A673 (cell line): ENCODE measurements at regions of chr3 and their contacts with region 1.

Region 1: GRCh38 chr3:30658328-30659052 is 52.1 kb downstream of the TGFBR2 start:
- DNase-seq: peak; percentile 84
- H3K4me3 ChIP-seq: peak overlapping the region; percentile 5
- H3K27ac ChIP-seq: peak overlapping the region; percentile 92
- H3K4me1 ChIP-seq: peaks cover 98% of the 10 kb centered on the region
- H3K27me3 ChIP-seq: no peaks in the 10 kb centered on the region
- CTCF ChIP-seq: peak; percentile 42

Region 2: GRCh38 chr3:30481241-30481640 is 177.2 kb before region 1 on chr3:
- CTCF ChIA-PET with region 1: no interaction called
- POLR2A ChIA-PET with region 1: no interaction called
- intact Hi-C with region 1: no loop called
- DNase-seq: no peak
- H3K4me3 ChIP-seq: no peak overlapping the region
- H3K27ac ChIP-seq: no peak overlapping the region
- H3K4me1 ChIP-seq: peaks cover 8% of the 10 kb centered on the region
- H3K27me3 ChIP-seq: no peaks in the 10 kb centered on the region
- CTCF ChIP-seq: no peak

Region 3: GRCh38 chr3:30606301-30607031 is 52.0 kb before region 1 on chr3 and contains the start of gene TGFBR2:
- CTCF ChIA-PET with region 1: no interaction called
- POLR2A ChIA-PET with region 1: no interaction called
- intact Hi-C with region 1: loop called (anchors 2 kb)
- DNase-seq: peak; percentile 94
- H3K4me3 ChIP-seq: peak within 1 kb of the TSS; percentile 89
- H3K27ac ChIP-seq: peak within 1 kb of the TSS; percentile 91
- H3K4me1 ChIP-seq: peaks cover 33% of the 10 kb centered on the region
- H3K27me3 ChIP-seq: no peaks in the 10 kb centered on the region
- CTCF ChIP-seq: no peak
- total RNA-seq, gene TGFBR2: 16.1 TPM in 2 replicates

Region 4: GRCh38 chr3:30644593-30645012 is 13.9 kb before region 1 on chr3:
- CTCF ChIA-PET with region 1: no interaction called
- POLR2A ChIA-PET with region 1: no interaction called
- intact Hi-C with region 1: no loop called
- DNase-seq: peak; percentile 81
- H3K4me3 ChIP-seq: no peak overlapping the region
- H3K27ac ChIP-seq: peak overlapping the region; percentile 44
- H3K4me1 ChIP-seq: peaks cover 42% of the 10 kb centered on the region
- H3K27me3 ChIP-seq: no peaks in the 10 kb centered on the region
- CTCF ChIP-seq: no peak

Region 5: GRCh38 chr3:31077021-31077601 is 418.6 kb after region 1 on chr3:
- CTCF ChIA-PET with region 1: no interaction called
- POLR2A ChIA-PET with region 1: no interaction called
- intact Hi-C with region 1: no loop called
- DNase-seq: peak; percentile 9
- H3K4me3 ChIP-seq: no peak overlapping the region
- H3K27ac ChIP-seq: no peak overlapping the region
- H3K4me1 ChIP-seq: no peaks in the 10 kb centered on the region
- H3K27me3 ChIP-seq: no peaks in the 10 kb centered on the region
- CTCF ChIP-seq: no peak

Region 6: GRCh38 chr3:31432897-31433678 is 774.6 kb after region 1 on chr3:
- CTCF ChIA-PET with region 1: no interaction called
- POLR2A ChIA-PET with region 1: no interaction called
- intact Hi-C with region 1: no loop called
- DNase-seq: no peak
- H3K4me3 ChIP-seq: no peak overlapping the region
- H3K27ac ChIP-seq: no peak overlapping the region
- H3K4me1 ChIP-seq: no peaks in the 10 kb centered on the region
- H3K27me3 ChIP-seq: no peaks in the 10 kb centered on the region
- CTCF ChIP-seq: no peak